Esophagus muscularis mucosa (tissue), 4 donors: ENCODE measurements at regions of chr3 and their contacts with region 1.

Region 1: DNA sequence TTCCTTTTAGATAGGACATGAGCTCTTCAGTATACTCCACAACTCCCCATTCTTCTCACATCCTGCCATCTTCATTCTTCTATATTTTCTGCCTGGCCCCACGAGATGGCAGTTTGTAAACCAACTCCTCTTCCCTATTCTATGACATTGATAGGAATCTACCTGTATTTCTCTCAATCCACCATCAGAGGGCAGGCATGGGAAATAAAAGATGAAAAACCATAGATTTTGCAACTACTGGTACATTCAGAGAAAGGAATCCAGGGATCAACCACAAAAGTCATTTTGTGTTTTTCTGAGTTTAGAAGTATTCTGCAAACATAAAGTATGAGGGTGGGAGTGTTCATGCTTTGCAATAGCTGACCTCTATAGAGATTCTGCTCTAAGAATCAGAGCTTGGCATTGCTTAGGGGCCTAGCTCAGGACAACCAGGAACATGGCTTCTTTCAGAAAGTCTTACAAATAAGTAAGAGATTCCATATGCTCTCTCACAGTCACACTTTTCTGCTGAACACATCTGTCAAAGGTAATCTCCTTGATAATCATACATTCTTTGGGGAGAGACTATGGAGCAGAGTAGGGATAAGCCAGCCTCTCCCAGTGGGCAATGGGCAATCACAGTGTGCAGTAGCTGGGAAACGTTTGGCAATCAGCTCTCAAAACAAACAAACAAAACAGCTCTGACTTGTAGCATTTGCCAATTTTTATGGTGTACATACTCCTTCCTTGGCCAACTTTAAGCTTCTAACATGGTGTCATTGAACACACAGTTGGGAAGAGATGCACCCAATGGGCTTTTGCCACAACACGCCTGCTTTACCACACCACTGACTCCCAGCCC is 43.1 kb upstream of the SLC25A36 start:
- DNase-seq: no peak
- H3K4me3 ChIP-seq: no peak overlapping the region
- H3K27ac ChIP-seq: no peak overlapping the region
- H3K4me1 ChIP-seq: no peaks in the 10 kb centered on the region
- H3K27me3 ChIP-seq: peaks cover 0 to 10% (median 0%) of the 10 kb centered on the region in 4 donors
- CTCF ChIP-seq: peak; percentile 49 to 64 (median 63)
- EP300 ChIP-seq: no peak
- POLR2A ChIP-seq: no peak

Region 2: GRCh38 chr3:140910860-140911259 is 12.3 kb after region 1 on chr3:
- intact Hi-C with region 1: no loop called
- DNase-seq: no peak
- H3K4me3 ChIP-seq: peak overlapping the region in 1 of 4 donors; percentile 29
- H3K27ac ChIP-seq: no peak overlapping the region
- H3K4me1 ChIP-seq: no peaks in the 10 kb centered on the region
- H3K27me3 ChIP-seq: no peaks in the 10 kb centered on the region
- CTCF ChIP-seq: no peak
- EP300 ChIP-seq: no peak
- POLR2A ChIP-seq: no peak

Region 3: DNA sequence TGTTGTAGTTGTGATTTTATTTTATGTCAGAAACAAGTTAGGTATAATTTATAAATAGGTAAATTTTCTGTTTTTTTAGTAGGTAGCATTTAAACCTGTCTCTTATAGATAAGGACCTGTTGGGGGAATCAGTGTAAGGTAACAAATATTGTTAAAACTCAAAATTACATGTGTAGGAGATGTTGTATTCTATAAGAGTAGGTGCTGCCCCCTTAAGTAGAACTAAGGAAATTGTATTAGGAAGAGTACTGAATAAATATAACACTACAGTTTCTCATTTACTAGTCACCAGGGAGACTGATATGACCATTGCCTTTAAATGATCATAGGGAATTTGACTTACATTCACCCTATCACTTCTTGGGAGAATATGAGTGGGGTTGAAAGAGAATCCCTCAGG is 74.3 kb after region 1 on chr3:
- intact Hi-C with region 1: loop called (anchors 5 kb)
- DNase-seq: no peak
- H3K4me3 ChIP-seq: no peak overlapping the region
- H3K27ac ChIP-seq: no peak overlapping the region
- H3K4me1 ChIP-seq: peaks cover 0 to 6% (median 0%) of the 10 kb centered on the region in 4 donors
- H3K27me3 ChIP-seq: no peaks in the 10 kb centered on the region
- CTCF ChIP-seq: peak; percentile 23 to 43 (median 29)
- EP300 ChIP-seq: no peak
- POLR2A ChIP-seq: no peak

Region 4: DNA sequence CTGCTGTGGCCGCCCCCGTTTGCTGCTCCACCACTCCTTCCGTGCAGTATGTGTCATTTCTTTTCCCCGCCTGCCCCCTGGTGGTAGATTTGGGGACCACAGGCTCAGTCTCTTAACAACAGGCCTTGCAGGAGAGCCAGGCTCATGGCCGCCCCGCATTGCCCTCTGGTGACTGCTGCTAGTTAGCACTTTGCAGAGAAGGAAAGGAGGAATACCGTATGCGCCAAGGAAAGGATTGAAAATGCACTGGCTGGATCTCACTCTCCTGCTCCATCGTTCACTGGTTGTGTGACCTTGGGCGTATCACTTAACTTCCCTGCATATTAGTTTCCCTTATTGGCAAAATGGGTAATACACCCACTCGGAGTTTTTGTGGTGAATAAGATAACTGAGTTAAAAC is 293.8 kb after region 1 on chr3:
- intact Hi-C with region 1: loop called (anchors 5 kb)
- DNase-seq: peak; percentile 100
- H3K4me3 ChIP-seq: no peak overlapping the region
- H3K27ac ChIP-seq: no peak overlapping the region
- H3K4me1 ChIP-seq: no peaks in the 10 kb centered on the region
- H3K27me3 ChIP-seq: peaks cover 0 to 4% (median 0%) of the 10 kb centered on the region in 4 donors
- CTCF ChIP-seq: peak; percentile 99
- EP300 ChIP-seq: no peak
- POLR2A ChIP-seq: no peak